AG04450 (cell line): ENCODE measurements at regions of chr6 and their contacts with region 1.

Region 1: GRCh38 chr6:159654483-159655098 is 38.5 kb downstream of the SOD2 start:
- DNase-seq: peak; percentile 32
- H3K4me3 ChIP-seq: no peak overlapping the region
- H3K27ac ChIP-seq: no peak overlapping the region
- H3K27me3 ChIP-seq: no peaks in the 10 kb centered on the region
- CTCF ChIP-seq: peak; percentile 52

Region 2: DNA sequence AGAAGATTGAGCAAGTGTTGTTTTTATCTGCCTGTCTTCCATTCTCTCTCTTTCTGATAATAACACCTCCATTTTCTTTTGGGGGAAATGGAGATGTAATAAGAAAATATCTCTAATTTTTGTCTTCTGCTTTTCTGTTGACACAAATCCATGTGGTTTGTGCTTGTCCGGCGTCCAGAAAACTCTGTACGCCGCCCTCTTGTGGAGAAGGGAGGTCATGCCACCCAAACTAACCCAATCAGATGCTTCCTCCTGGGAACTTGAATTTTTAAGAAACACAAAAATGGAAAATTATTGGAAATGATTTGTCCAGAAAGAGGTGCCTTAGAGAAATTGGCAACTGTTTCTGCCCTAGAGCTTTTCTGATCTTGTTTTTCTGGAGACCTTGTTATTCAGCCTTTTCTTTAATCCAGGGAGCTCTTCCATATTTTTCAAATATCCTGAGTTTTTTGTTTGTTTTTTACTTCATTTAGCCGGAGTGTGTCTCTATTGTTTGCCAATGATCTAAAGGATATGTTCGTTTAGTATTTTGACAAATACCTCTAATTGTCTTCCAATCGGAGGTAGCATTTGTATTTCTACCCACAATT is 503.2 kb before region 1 on chr6:
- CTCF ChIA-PET with region 1: interaction called, 17 read pairs
- POLR2A ChIA-PET with region 1: no interaction called
- DNase-seq: peak; percentile 21
- H3K4me3 ChIP-seq: no peak overlapping the region
- H3K27ac ChIP-seq: no peak overlapping the region
- H3K27me3 ChIP-seq: no peaks in the 10 kb centered on the region
- CTCF ChIP-seq: peak; percentile 80

Region 3: GRCh38 chr6:159217595-159218275 is 436.9 kb before region 1 on chr6:
- CTCF ChIA-PET with region 1: interaction called, 22 read pairs
- POLR2A ChIA-PET with region 1: no interaction called
- DNase-seq: peak; percentile 3
- H3K4me3 ChIP-seq: no peak overlapping the region
- H3K27ac ChIP-seq: no peak overlapping the region
- H3K27me3 ChIP-seq: no peaks in the 10 kb centered on the region
- CTCF ChIP-seq: peak; percentile 33; the same call in 1 of the 2 replicates

Region 4: DNA sequence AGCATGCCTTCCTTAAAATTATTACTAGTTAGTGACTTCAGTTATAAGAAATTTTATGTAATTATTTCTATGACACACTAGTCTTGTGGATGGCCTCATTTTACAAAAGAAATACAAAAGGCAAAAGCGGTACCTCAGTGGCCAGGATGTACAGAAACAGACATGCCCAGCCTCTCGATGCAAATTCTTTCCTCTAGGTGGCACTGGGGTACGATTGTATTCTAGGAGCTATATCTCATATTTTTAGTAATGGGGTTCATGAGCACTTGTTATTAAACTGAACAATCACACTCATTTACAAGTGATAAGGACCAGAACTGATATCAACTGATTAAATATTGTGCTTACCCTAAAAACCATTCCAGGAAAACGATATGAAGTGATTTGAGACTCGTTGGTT is 21.4 kb before region 1 on chr6:
- CTCF ChIA-PET with region 1: interaction called, 52 read pairs
- POLR2A ChIA-PET with region 1: no interaction called
- DNase-seq: no peak
- H3K4me3 ChIP-seq: no peak overlapping the region
- H3K27ac ChIP-seq: no peak overlapping the region
- H3K27me3 ChIP-seq: no peaks in the 10 kb centered on the region
- CTCF ChIP-seq: peak; percentile 65

Region 5: DNA sequence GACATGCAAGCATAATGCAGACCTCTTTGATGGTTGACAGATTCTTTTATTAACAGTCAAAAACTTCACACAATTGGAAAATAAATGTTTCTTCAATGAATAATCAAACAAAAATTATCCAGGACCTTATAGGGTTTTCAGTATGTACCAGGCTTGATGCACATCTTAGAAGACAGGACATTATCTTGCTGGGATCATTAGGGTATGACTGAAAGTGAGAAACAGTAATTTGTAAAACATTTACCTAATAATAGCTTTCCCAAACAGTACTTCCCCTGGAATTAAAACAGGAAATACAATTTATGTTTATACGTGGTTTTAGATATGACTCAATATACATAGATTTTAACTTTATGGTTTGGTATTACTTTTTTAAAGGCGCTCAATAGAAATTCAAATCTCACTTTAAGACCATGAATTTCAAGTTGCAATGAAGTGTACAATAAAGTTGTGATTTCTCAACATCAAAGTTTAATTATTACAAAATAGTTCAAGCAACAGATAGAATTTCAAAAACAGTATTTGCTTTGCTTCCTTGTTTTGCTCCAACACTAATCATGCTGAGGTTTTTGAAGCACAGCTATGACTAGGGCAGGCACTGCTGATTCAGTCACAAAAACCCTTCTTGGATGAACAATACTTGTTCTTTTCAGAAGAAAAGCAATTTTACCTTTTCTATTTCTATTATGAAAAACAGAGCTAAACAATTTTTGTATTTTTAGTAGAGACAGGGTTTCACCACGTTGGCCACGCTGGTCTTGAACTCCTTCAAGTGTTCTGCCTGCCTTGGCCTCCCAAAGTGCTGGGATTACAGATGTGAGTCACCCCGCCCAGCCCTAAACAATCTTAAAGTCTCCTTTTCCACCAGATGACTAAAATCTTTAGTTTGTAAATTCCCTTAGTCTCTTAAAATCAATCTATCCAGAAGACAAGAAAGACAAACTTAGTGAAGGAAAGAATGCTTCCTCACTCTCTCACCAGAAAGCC is 24.8 kb after region 1 on chr6:
- CTCF ChIA-PET with region 1: interaction called, 29 read pairs
- POLR2A ChIA-PET with region 1: no interaction called
- DNase-seq: peak; percentile 55
- H3K4me3 ChIP-seq: no peak overlapping the region
- H3K27ac ChIP-seq: peak overlapping the region; percentile 35
- H3K27me3 ChIP-seq: no peaks in the 10 kb centered on the region
- CTCF ChIP-seq: no peak